ENCODE measurements at regions of chr1 and their contacts with region 1.

Region 1: DNA sequence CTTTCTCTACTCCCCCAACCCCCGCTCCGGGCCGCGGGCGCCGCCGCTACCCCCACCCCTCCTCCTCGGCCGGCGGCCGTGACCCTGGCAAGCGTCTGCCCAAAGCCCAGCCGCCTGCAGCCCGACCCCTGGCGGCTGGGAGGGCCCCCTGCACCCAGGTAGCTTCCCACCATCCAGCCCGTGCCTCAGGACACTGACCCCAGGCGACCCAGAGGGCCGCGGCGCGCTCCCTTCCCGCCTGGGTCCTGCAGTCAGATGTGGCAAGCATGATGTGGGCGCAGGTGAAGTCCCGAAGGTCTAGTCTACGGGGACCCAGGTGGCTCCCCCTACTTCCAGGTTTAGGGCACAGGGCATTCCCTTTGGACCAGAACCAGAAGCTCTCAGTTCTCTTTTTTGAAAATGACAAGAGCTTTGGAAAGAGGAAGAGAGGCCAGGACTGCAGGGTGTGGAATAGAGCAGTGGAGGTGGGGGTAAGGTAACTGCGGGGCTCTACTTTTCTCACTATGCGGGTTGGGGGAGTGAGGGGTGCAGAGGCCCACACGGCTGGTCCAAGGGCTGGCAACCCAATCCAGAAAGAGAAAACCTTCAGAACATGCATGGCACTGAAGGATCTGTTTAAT is at the start of gene DENND4B:
- DNase-seq: no peak
- H3K4me3 ChIP-seq: peak within 1 kb of the TSS; percentile 86
- H3K27ac ChIP-seq: peak within 1 kb of the TSS; percentile 61
- H3K27me3 ChIP-seq: no peaks in the 10 kb centered on the region
- CTCF ChIP-seq: peak; percentile 90
- polyA plus RNA-seq, gene DENND4B: 10.3 and 13.3 TPM in 2 replicates

Region 2: GRCh38 chr1:153790966-153791647 is 155.6 kb before region 1 on chr1:
- CTCF ChIA-PET with region 1: interaction called, 10 read pairs
- POLR2A ChIA-PET with region 1: no interaction called
- DNase-seq: peak; percentile 85
- H3K4me3 ChIP-seq: peak overlapping the region; percentile 41
- H3K27ac ChIP-seq: peak overlapping the region; percentile 99
- H3K27me3 ChIP-seq: no peaks in the 10 kb centered on the region
- CTCF ChIP-seq: no peak

Region 3: DNA sequence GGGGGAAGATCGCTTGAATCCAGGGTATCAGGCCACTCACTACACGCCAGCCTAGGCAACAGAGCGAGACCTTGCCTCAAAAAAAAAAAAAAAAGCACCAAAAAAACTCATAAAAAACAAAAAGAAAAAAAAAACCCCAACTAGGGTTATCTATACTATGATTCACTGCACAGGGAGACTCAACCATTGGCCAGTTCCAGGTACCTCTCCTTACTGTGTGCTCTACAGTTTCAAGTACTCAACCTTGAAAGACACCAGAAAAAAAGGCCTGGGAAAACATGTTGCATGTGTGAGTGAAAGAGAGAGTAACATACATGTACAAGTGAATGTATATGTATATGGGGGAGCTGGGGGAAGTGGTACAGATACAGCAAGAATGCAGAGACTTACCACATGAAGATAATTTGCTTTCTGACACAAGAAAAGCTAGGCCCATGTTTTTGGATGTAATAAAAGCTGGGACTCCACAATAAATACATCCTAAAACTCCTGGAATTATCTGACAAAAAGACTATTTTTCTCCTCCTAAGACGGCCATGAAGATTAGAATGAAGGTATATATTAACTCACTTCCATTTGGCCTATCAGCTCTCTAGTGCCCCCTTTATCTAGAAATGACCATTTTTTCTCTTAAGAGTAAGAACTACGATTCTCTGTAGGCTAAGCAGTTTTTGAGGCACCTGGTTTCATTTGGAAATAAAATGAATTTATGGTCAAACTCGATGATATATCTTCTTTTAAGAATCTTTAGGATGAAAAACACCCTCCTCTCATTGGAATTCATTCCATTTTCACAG is 119.4 kb before region 1 on chr1:
- CTCF ChIA-PET with region 1: interaction called, 16 read pairs
- POLR2A ChIA-PET with region 1: no interaction called
- DNase-seq: no peak
- H3K4me3 ChIP-seq: no peak overlapping the region
- H3K27ac ChIP-seq: no peak overlapping the region
- H3K27me3 ChIP-seq: no peaks in the 10 kb centered on the region
- CTCF ChIP-seq: no peak

Region 4: DNA sequence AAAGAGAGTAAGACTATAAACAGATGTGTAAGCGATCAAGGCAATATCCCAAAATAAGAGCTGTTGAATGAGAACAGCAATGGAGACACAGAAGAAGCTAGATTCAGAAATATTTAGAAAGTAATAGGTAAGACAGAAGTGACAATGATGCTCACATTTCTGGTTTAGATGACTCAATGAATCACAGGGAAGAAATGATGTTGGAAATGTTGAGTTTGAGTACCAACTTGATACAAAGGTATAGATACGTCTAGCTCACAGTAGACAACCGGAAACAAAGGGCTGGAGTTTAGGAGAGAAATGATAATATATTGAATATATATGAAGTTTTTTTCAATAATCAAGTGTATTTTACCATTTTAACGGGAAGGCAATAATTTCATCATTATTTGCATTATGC is 30.4 kb before region 1 on chr1:
- CTCF ChIA-PET with region 1: no interaction called
- POLR2A ChIA-PET with region 1: no interaction called
- DNase-seq: no peak
- H3K4me3 ChIP-seq: no peak overlapping the region
- H3K27ac ChIP-seq: no peak overlapping the region
- H3K27me3 ChIP-seq: no peaks in the 10 kb centered on the region
- CTCF ChIP-seq: no peak

Region 5: GRCh38 chr1:153958111-153958960 is 11.6 kb after region 1 on chr1 and contains the start of gene CRTC2:
- CTCF ChIA-PET with region 1: interaction called, 18 read pairs
- POLR2A ChIA-PET with region 1: interaction called, 19 read pairs
- DNase-seq: peak; percentile 95
- H3K4me3 ChIP-seq: peak within 1 kb of the TSS; percentile 92
- H3K27ac ChIP-seq: peak within 1 kb of the TSS; percentile 78
- H3K27me3 ChIP-seq: no peaks in the 10 kb centered on the region
- CTCF ChIP-seq: no peak
- polyA plus RNA-seq, gene CRTC2: 12.7 and 13.8 TPM in 2 replicates

Region 6: GRCh38 chr1:154170547-154171222 is 224.0 kb after region 1 on chr1:
- CTCF ChIA-PET with region 1: no interaction called
- POLR2A ChIA-PET with region 1: no interaction called
- DNase-seq: no peak
- H3K4me3 ChIP-seq: no peak overlapping the region
- H3K27ac ChIP-seq: no peak overlapping the region
- H3K27me3 ChIP-seq: no peaks in the 10 kb centered on the region
- CTCF ChIP-seq: no peak

Measured in AG04450 (cell line).